Head of caudate nucleus (tissue), 42 donors: ENCODE measurements at regions of chr11 and their contacts with region 1.

Region 1: DNA sequence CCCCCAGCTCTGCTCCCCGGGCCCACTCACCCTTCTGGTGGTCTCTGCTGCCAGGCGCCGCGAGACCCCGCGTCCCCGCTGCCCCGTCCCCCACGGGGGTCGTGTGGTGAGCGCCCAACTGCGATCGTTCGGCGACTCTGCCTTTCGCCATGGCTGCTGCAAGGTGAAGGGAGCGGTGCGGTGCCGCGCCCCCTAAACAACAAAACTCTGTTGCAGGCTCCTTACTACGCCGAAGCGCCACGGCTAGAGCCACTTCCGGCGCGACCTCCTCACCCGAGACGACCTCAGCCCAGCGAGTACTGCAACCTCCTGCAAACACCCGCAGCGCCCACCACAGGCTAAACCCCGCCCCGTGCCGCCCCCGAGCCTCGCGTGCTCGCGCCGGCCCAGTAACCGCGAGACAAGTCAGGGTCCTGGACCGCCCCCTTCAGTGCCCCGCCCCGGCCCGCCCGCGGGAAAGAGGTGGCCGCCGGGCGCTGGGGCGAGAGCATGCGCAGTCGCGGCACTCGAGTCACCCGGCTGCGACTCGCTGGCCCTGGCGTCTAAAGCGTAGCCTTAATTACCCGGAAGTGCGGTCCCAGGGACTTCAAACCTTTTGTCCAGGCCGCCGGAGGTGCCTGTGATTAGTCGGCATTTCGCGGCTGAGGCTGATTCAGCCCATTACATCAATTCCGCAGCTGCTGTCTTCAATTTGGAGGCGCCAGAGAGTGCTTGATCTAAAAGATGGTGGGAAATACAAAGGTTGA is at the start of gene TMEM41B:
- DNase-seq: peak; percentile 90 to 99 (median 97)

Region 2: DNA sequence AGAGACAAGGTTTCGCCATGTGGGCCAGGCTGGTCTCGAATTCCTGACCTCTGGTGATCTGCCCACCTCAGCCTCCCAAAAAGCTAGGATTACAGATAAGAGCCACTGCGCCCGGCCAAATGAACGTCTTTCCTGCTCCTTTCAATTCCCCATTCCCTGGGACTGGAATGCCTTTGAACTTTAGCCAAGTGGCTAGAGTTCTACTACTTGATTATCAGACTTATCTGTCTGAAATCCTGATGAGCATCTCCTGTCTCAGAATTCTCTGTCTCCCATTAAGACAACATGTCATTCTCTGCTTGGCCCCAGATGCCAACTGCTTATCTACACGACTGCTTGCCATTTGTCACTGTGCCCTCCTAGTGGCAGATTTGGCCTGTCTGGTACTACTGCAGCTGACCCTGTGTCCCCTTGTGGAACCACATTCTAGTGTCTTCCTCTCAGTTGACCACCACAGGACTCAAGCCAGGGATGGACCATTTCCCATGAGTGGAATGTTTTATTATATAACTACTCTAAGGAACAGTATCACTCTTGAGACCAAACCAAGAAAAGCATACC is 36.9 kb after region 1 on chr11:
- intact Hi-C with region 1: no loop called
- DNase-seq: no peak

Region 3: DNA sequence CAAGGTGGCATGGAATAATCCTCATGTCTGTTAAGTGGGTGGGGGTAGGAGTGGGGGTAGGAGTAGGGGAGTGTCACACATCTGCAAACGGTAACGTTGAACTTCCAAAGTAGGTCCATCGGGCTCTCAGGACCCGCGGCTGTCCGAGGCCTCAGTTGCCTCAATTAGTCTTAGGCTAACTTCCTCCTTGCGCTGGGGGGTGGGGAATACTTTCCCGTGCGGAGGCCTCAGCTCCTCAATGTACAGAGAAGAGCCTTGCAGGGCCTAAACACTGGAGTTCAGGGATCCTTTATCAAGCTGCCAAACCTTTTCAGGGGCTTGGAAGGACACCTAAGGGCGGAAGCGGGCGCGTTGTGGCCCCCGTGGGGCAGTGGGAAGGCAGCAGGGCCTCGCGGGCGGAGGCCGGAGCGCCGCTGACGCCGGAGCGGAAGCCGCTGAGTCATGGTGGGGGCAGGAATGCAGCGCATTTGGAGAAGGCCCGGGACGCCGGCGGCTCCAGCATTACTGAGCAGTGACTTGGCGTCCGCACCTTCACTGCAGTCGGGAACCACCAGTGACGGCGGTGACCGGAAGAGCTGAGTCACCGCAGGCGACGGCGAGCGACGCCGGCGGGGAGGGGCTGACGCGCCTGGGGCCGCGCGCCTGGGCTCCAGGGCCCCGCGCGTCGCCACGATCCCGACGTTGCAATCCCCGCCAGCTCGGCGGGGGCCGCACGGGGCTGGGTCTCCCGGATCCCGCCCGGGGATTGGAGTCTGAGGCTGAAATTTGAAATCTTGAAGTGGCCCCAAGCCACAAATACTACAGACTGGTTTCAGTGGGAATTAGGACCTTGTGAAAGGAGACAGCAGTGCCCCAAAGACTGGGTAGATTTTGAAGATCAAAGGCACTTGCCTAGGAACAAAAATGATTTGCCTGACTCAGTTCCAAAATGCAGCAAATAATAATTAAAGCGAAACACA is 49.8 kb after region 1 on chr11:
- intact Hi-C with region 1: loop called (anchors 5 kb)
- DNase-seq: peak; percentile 75 to 97 (median 89)

Region 4: DNA sequence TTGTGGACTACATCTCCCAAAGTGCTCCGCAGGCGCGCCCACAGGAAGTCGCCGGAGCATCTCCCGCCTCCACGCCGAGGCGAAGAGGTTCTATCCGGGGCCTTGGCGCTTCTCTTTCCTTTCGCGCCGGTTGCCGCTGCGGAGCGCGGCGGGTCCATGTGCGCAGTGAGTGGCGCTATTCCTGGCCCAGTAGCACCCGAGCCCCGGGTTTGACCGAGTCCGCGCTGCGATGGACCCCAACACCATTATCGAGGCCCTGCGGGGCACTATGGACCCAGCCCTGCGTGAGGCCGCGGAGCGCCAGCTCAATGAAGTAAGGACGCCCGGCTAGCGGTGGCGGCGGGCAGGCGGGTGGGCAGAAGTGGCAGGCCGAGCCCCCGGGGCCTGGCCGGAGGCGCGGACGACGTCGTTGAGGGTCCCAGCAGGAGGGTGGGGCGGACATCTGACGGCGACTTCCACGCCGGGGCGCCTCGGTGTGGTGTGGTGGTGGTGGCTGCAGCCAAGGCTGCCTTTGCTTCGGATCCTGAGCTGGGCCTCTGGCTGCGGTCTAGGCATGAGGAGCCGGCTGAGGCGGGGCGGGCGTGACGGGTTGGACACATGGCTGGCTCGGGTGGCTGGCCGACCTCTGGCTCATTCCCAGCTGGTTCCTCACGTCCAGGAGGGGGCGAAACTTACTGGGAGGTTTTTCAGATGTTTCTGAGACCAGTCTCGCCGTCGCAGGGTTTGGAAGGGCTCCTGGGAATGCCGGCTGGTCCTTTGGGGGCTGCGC is 70.3 kb after region 1 on chr11 and contains the start of gene IPO7:
- intact Hi-C with region 1: loop called (anchors 2 kb)
- DNase-seq: peak; percentile 87 to 98 (median 95)